ENCODE measurements at regions of chr1 and their contacts with region 1.

Region 1: DNA sequence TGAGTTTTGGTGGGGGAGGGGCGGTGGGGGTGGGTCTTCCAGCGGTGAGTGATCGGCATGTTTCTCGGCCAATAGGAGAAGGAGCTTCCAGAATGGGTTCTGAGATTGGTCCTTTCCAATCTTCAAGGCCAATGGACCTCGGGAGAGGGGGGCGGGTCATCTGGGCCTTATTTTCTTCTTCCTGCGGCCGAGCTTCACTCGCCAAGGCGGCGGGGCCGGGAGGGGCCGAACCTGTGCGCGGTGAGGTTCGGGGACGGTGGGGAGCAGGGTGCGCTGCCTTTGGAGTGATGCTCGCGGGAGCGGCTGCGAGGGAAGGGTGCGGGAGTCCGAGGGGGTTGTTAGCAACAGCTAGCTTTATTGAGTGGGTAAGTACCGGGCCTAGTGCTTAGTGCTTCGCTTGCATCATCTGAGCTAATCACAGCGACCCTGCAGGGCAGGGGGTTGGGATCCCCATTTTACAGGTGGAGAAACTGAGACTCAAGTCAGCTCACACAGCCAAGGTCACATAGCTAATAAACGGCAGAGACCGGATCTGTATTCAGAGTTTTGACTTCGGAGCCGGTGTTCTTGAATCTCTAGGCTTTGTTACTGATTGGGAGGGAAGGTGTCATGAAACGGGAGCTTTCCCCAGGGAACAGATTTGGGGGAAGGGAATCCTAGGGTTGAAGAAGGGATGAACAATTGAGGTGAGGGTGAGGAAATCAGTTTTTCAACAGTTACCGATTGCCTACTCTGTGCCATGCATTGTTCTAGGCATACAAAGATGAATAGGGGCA is 549 bp downstream of the KDM4A start:
- DNase-seq: peak; percentile 95
- ATAC-seq: peak; percentile 91 to 94

Region 2: DNA sequence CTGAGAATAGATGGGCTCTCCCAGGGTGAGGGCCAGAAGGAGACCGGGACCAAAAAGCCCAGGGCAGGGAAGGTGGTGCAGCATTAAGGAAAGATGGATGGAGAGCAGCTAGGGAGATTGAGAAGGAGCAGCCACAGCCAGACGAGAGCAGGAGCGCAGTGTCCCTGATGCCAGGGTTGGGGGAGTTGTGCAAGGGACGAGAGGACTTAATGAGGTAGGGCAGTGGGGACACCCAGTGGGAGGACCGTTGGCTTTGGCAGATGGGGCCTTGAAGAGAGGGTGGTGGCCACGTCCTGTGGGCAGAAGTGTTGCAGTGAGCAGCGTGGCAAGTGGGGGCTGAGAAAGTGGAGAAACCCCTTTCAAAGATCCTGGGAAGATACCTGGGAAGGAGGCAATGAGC is 38.5 kb before region 1 on chr1:
- intact Hi-C with region 1: no loop called
- DNase-seq: no peak
- ATAC-seq: no peak

Region 3: DNA sequence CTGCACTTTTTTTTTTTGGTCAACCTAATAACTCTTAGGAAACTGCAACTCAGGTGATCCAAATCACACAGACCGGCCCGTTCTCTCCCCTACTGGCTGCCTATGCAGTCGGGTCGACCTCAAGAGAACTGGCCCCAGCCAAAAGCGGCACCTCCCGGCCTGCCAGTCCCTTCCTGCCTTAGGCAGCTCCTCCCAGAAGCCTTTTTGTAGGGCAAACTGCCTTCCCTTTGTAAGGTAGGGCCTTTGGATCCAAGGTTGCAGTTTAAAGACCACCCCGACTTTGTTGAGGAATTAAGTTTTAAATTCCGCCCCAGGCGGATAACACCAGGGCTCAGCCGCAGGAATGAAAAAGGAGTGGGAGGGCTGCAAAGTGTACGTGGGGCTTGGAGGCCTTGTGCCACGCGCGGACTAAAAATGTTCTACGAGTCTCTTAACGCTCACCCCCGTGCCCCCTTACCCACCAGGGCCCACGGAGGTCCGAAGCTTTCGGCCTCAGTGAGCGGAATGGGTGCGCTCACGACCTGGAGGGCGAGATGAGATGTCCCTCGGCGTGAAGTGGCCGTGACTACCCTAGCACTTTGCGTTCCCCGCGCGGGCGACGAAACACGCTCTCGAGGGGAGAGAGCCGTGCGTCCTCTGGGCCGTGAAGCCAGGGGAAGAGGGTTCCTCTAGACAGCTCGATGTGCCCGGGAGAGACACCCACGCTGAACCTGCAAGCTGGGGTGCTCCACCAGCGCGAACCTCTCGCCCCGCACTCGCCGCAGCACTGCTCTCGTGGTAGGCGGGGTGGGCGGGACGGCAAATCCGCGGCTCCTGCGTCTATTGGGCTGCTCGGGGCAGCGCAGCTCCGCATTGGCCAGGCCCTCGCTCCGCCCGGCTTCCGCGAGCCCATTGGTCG is 56.3 kb after region 1 on chr1:
- intact Hi-C with region 1: loop called in 1 of 2 experiments (anchors 5 kb)
- DNase-seq: peak; percentile 95
- ATAC-seq: peak; percentile 97 to 98

Region 4: GRCh38 chr1:43750083-43750482 is 99.6 kb after region 1 on chr1:
- intact Hi-C with region 1: no loop called
- DNase-seq: no peak
- ATAC-seq: no peak

Measured in left cardiac atrium (tissue), 4 donors.